ENCODE measurements at regions of chr1 and their contacts with region 1.

Region 1: DNA sequence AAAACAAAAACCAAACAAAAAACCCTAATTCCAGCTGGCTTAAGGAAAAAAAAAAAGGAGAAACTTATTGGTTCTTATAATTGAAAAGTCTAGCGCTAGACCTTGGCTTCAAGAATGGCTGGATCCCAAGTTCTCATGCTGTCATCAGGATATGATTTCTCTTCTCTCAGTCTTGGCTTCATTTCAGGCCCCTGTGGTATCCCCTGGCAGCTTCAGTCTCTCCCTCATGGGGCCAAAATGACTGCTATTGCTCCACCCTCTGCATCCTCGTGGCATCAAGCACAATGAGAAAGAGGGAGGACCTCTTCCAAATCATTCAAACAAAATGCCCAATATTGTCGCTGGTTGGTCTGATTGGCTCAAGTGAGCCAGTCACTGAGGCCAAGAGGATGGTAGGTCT is 80.7 kb downstream of the GIPC2 start:
- DNase-seq: no peak
- H3K4me3 ChIP-seq: no peak overlapping the region
- H3K27ac ChIP-seq: no peak overlapping the region
- H3K4me1 ChIP-seq: no peaks in the 10 kb centered on the region
- H3K27me3 ChIP-seq: no peaks in the 10 kb centered on the region
- CTCF ChIP-seq: no peak

Region 2: DNA sequence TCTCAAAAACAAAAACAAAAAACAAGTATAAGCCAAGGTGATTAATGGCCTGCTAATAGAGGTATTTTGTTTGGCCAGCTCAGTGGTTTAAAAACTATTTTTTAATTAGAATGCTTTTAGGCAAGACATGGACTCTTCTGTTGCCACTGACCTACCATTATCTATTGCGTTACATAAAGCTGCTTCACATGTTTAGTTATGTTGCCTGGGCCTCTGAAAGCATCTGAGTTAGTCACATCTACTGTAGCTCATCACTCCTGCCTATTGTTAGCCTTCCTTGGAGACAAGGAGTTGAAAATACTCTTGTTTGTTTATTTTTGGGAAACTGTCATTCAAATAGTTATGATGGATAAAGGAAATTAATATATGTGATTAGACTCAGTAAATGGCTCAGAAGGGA is 107.5 kb before region 1 on chr1:
- CTCF ChIA-PET with region 1: no interaction called
- POLR2A ChIA-PET with region 1: no interaction called
- intact Hi-C with region 1: no loop called
- DNase-seq: no peak
- H3K4me3 ChIP-seq: no peak overlapping the region
- H3K27ac ChIP-seq: no peak overlapping the region
- H3K4me1 ChIP-seq: no peaks in the 10 kb centered on the region
- H3K27me3 ChIP-seq: no peaks in the 10 kb centered on the region
- CTCF ChIP-seq: no peak

Region 3: GRCh38 chr1:78607334-78607927 is 480.9 kb after region 1 on chr1:
- CTCF ChIA-PET with region 1: no interaction called
- POLR2A ChIA-PET with region 1: no interaction called
- intact Hi-C with region 1: loop called (anchors 1 kb)
- DNase-seq: no peak
- H3K4me3 ChIP-seq: no peak overlapping the region
- H3K27ac ChIP-seq: no peak overlapping the region
- H3K4me1 ChIP-seq: no peaks in the 10 kb centered on the region
- H3K27me3 ChIP-seq: no peaks in the 10 kb centered on the region
- CTCF ChIP-seq: peak; percentile 83